Left ventricle myocardium inferior (tissue), 1 donor: ENCODE measurements at regions of chr20 and their contacts with region 1.

Region 1: GRCh38 chr20:51311606-51312495 is 230.7 kb downstream of the NFATC2 start:
- DNase-seq: no peak
- H3K4me3 ChIP-seq: peak overlapping the region; percentile 25
- H3K27ac ChIP-seq: no peak overlapping the region
- H3K4me1 ChIP-seq: peaks cover 13% of the 10 kb centered on the region
- H3K27me3 ChIP-seq: peaks cover 7% of the 10 kb centered on the region
- CTCF ChIP-seq: no peak

Region 2: DNA sequence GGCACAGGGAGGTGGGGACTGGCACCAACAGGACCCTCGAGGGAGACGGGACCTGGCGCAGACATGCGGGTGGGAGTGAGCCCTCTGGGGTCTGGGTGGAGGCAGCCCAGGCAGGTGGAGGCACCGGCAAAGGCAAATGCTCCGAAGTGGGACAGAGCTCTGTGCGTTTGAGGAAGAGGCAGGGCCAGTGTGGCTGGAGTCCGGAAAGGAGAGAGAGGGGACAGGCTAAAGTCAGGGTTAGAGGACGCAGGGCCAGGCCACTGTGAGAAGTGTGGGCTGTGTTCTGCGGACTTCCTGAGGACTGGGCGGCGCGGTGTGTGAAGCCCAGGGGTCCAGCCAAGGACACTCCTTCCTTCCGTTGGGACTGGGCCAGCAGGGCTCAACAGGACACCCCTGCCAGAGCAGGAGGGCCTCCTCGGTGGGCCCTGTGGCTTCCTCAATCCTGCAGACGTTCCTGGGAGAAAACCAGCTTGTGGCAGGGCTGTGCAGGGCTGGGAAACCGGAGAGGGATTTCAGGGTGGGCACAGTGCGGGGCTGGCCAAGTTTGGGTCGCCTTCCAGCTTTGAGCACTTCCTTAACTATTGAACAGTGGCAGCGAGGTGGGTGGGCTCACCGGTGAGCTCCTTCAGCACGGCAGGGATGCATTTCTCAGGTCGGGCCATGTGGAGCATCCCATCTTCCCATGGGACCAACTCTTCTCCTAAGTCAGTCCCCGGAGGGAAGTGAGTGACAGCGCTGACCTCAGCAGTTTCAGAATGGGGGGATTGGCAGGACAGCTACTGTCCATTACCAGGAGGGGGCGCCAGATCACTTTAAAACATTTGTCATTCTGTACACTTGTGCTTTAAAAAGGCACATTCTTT is 330.8 kb before region 1 on chr20:
- intact Hi-C with region 1: loop called (anchors 5 kb)
- DNase-seq: no peak
- H3K4me3 ChIP-seq: peak overlapping the region; percentile 30
- H3K27ac ChIP-seq: no peak overlapping the region
- H3K4me1 ChIP-seq: peaks cover 6% of the 10 kb centered on the region
- H3K27me3 ChIP-seq: peaks cover 93% of the 10 kb centered on the region
- CTCF ChIP-seq: peak; percentile 86

Region 3: DNA sequence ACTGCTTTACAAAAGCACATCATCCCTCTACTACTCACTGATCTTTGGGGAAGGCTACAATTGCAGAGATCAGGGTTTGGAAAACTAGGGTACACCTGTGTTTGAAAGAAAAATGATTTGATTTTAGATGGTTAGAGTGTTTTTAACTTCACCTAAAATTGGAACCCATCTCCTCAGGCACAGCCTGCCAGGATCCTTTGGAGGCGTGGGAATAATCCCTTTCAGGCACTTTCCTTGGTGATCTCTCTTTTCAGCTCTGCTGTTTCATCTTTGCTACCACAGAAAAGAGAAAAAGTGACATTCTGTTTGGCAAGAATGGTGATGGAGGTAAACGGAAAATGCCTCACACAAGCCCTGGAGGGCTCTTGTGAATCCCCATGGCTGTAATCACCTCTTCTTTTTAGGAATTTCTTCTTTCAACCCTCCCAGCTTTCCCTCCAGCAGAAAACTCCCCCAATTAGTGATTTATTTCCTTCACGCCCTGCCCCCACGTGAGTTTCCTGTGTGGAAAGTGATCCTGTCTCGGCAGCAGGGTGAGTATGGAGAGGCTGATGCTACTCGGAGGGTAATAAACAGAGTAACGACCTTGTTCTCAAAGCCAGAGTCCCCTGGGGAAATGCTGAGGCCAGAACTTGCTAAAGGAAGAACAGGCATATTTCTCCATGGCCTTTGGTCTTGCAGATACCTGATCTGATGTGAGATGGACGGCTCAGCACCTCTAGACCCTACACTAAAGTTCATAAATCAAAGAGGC is 298.1 kb before region 1 on chr20:
- intact Hi-C with region 1: no loop called
- DNase-seq: no peak
- H3K4me3 ChIP-seq: no peak overlapping the region
- H3K27ac ChIP-seq: no peak overlapping the region
- H3K4me1 ChIP-seq: no peaks in the 10 kb centered on the region
- H3K27me3 ChIP-seq: peaks cover 87% of the 10 kb centered on the region
- CTCF ChIP-seq: no peak